Right ventricle myocardium inferior (tissue), 1 donor: ENCODE measurements at regions of chr22 and their contacts with region 1.

Region 1: GRCh38 chr22:23849009-23850006 is 8.4 kb upstream of the SLC2A11 start:
- DNase-seq: peak; percentile 92
- ATAC-seq: peak; percentile 45

Region 2: DNA sequence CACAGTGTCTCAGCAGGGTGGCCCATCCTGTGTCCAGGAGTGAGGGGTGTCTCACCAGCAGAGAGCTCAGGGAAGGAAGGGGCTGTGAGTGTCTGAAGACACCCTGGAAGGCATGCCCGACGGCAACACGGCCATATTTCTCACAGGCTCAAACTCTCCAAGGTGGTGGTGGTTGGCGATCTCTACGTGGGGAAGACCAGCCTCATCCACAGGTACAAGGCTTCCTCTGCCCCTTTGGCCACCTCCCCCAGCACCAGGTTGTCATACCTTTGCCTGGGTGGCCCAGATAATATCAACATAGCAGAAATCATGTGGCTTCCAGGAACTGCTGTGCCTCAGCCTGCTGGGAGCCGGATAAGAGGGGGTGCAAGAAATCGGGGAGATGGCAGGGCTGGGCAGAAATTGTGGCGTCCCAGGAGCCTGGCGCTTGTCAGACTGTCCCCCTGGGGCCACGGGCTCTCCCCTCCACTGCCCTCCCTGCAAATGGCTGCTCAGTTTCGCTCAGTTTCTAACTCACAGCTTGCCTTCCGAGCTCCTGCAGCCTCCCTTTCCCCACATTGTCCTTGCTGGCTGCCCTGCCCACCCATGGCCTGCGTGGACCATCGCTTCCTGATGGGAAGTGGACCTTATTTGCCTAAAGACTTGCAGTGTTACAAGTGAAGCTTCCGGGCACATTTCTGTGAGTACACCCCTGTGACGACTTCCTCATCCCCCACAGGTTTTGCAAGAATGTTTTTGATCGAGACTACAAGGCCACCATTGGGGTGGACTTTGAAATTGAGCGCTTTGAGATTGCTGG is 696.8 kb before region 1 on chr22:
- intact Hi-C with region 1: no loop called
- DNase-seq: no peak
- ATAC-seq: no peak

Region 3: GRCh38 chr22:23521441-23522113 is 327.7 kb before region 1 on chr22:
- intact Hi-C with region 1: loop called (anchors 5 kb)
- DNase-seq: peak; percentile 94
- ATAC-seq: peak; percentile 93

Region 4: GRCh38 chr22:23539135-23539838 is 310.0 kb before region 1 on chr22:
- intact Hi-C with region 1: loop called (anchors 5 kb)
- DNase-seq: peak; percentile 89
- ATAC-seq: peak; percentile 98

Region 5: GRCh38 chr22:23767673-23768548 is 81.4 kb before region 1 on chr22 and contains the start of gene CHCHD10:
- intact Hi-C with region 1: loop called (anchors 5 kb)
- DNase-seq: peak; percentile 93
- ATAC-seq: peak; percentile 82
- total RNA-seq, gene CHCHD10: 1,642 TPM

Region 6: DNA sequence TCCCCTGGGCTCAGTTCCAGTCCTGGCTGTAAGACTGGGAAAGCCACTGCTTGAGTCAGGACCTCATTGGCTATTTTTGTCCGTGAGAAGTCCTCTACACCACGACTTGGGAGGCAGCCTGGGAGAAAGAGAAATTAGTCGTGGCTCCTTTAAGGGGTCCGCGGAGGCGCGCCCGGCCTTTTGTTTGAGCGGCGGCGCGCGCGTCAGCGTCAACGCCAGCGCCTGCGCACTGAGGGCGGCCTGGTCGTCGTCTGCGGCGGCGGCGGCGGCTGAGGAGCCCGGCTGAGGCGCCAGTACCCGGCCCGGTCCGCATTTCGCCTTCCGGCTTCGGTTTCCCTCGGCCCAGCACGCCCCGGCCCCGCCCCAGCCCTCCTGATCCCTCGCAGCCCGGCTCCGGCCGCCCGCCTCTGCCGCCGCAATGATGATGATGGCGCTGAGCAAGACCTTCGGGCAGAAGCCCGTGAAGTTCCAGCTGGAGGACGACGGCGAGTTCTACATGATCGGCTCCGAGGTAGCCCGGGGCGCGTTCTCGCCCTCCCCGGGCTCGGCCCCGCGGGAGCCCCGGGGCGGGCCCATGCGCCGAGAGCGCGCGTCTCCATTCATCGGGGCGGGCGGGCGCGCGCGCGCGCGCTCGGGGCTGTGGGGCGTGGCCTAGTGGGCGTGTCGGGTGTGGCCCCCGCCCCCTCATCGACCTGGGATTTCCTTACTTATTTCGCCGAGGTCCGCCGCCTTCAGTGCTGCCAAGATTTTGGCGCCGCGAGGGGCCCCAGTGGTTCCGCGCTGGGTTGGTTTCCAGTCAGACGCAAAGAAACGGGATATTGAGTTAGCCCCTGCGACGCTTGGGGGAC is 62.3 kb before region 1 on chr22 and contains the start of gene SMARCB1:
- intact Hi-C with region 1: loop called (anchors 5 kb)
- DNase-seq: peak; percentile 98
- ATAC-seq: peak; percentile 93
- total RNA-seq, gene SMARCB1: 52.5 TPM